IMR-90 (cell line): ENCODE measurements at regions of chr6 and their contacts with region 1.

Region 1: GRCh38 chr6:168956884-168957730 is 296.5 kb downstream of the THBS2 start:
- DNase-seq: peak; percentile 80
- ATAC-seq: peak; percentile 99
- H3K4me3 ChIP-seq: no peak overlapping the region
- H3K27ac ChIP-seq: no peak overlapping the region
- H3K4me1 ChIP-seq: peaks cover 3% of the 10 kb centered on the region
- H3K27me3 ChIP-seq: no peaks in the 10 kb centered on the region
- CTCF ChIP-seq: peak; percentile 93
- POLR2A ChIP-seq: peak; percentile 42; the same call in 1 of the 2 replicates
- RAD21 ChIP-seq: peak; percentile 97

Region 2: DNA sequence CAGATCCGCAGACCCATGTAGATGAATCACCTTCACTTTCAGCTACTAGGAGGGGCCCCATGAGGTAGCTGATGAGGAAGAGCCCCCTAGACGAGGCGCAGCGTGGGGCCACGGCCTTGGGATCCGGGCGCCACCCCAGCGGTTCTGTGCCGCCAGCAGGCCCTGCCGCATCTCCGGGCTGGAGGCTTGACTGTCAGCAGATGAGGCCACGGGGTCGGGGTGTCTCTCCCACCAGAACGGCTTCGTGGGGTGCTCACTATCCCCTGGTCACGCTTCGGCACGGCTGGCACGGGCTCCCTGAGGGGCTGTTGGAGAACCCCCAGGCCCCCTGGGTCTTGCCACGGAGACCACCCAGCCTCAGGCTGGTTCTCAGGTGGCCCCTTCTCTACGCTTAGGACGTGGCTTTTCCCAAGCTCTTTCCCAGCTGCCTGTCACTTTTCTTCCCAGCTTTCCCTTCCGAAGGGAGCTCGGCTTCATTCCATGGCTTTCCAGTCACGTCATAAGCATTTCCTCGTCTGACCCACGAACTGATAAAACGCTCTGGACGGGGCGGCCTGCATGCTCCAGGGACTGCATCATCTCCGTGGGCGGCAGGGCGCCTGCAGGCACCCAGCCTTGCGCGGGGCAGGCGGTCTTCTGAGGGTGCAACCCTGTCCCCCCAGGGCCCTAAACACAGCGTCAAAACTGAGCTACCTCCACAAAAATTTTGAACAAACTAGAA is 210.6 kb after region 1 on chr6:
- CTCF ChIA-PET with region 1: no interaction called
- POLR2A ChIA-PET with region 1: no interaction called
- dilution Hi-C with region 1: no loop called
- in situ Hi-C with region 1: no loop called
- intact Hi-C with region 1: loop called (anchors 5 kb)
- DNase-seq: peak; percentile 99
- ATAC-seq: peak; percentile 80
- H3K4me3 ChIP-seq: no peak overlapping the region
- H3K27ac ChIP-seq: peak overlapping the region; percentile 96
- H3K4me1 ChIP-seq: peaks cover 32% of the 10 kb centered on the region
- H3K27me3 ChIP-seq: no peaks in the 10 kb centered on the region
- CTCF ChIP-seq: no peak
- POLR2A ChIP-seq: no peak; the same call in 1 of the 2 replicates
- RAD21 ChIP-seq: peak; percentile 33; the same call in 1 of the 2 replicates

Region 3: DNA sequence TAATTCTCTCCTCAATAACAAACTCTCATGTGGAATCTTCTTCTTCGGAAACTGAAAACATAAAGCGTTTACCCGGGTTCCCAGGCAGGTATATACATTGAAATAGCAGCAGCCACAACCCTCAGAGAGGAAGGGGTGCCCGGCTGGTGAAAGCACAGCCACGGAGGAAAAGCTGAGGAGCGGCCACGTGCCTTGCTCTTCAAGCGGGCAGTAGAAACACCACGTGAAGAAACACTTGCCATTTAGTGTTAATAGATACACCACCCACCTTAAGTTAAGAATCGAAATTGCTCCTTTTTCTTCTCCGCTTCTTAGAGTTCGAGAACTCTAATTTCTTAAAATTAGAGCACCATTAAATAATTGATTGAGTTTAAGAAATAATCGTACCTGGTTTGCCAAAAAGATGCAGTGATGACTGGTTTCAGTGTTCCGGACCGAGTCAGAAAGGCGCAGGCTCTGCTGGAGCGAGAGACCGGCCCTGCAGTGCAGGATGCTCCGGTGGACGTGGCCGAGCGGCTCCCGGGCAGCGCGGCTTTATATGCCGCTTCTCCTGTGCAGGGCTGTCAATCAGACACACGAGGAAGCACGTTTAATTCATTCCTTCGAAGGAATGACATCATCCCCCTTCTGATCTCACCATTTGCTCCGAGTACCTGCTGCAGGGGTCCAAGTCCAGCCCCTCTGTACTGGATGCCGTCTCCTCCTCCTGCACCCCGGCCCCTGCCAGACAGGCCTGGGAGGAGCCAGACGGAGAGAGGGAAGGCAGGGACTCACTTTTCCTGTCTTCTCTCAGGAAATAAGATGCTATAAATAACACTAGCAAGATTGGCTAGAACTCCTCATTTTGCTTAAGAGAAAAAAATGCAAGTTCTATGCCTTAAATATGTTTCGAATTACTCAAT is 296.5 kb after region 1 on chr6 and contains the start of gene THBS2:
- CTCF ChIA-PET with region 1: no interaction called
- POLR2A ChIA-PET with region 1: no interaction called
- dilution Hi-C with region 1: no loop called
- in situ Hi-C with region 1: no loop called
- intact Hi-C with region 1: loop called (anchors 2 kb)
- DNase-seq: peak; percentile 93
- ATAC-seq: peak; percentile 77
- H3K4me3 ChIP-seq: peak within 1 kb of the TSS; percentile 68
- H3K27ac ChIP-seq: peak within 1 kb of the TSS; percentile 51
- H3K4me1 ChIP-seq: peaks cover 15% of the 10 kb centered on the region
- H3K27me3 ChIP-seq: no peaks in the 10 kb centered on the region
- CTCF ChIP-seq: no peak
- POLR2A ChIP-seq: peak; percentile 95
- RAD21 ChIP-seq: no peak; the same call in 1 of the 2 replicates
- total RNA-seq, gene THBS2: 101 and 113 TPM in 2 replicates

Region 4: DNA sequence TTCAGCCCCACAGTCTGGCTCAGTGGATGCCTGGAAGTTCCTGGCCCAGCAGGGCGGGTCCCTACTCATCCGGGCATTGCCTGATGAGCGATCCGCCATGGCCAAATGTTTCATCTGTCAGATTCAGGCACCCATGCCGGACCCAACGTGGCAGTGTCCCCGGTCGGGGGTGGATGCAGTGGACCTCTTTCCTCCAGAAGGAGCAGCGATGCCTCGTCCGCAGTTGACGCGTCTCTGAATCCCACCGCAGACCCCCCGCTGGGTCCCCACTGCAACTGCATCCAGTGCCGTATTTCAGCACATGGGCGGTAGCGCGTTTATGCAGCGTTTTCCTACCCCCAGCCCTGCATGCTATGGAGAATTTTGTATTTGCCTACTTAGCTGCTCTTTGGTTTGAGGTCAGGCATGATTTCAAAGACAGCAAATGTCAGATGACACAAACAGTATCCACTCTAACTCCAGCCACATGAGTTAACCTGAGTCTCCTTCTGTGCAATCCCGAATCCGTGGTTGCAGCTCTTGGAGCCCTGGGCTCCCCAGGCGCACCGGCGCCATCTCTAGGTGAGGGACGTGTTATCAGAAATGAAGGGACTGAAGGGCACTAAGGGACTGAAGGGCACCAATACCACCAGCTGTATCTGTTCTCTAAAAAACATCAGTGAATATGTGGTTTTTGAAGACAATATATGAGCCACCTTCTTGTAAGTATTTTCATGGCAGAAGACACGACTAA is 369.1 kb after region 1 on chr6:
- CTCF ChIA-PET with region 1: no interaction called
- POLR2A ChIA-PET with region 1: no interaction called
- dilution Hi-C with region 1: no loop called
- in situ Hi-C with region 1: no loop called
- intact Hi-C with region 1: loop called (anchors 5 kb)
- DNase-seq: peak; percentile 52
- ATAC-seq: peak; percentile 43
- H3K4me3 ChIP-seq: no peak overlapping the region
- H3K27ac ChIP-seq: no peak overlapping the region
- H3K4me1 ChIP-seq: peaks cover 2% of the 10 kb centered on the region; the same call in 1 of the 2 replicates
- H3K27me3 ChIP-seq: no peaks in the 10 kb centered on the region
- CTCF ChIP-seq: peak; percentile 51
- POLR2A ChIP-seq: no peak
- RAD21 ChIP-seq: peak; percentile 66

Region 5: GRCh38 chr6:169520104-169520503 is 563.0 kb after region 1 on chr6:
- CTCF ChIA-PET with region 1: interaction called, 7 read pairs
- POLR2A ChIA-PET with region 1: no interaction called
- dilution Hi-C with region 1: no loop called
- in situ Hi-C with region 1: loop called (anchors 10 kb)
- intact Hi-C with region 1: loop called (anchors 1 kb)
- DNase-seq: peak; percentile 70
- ATAC-seq: peak; percentile 77
- H3K4me3 ChIP-seq: no peak overlapping the region
- H3K27ac ChIP-seq: no peak overlapping the region
- H3K4me1 ChIP-seq: no peaks in the 10 kb centered on the region
- H3K27me3 ChIP-seq: no peaks in the 10 kb centered on the region
- CTCF ChIP-seq: peak; percentile 82
- POLR2A ChIP-seq: peak; percentile 32; the same call in 1 of the 2 replicates
- RAD21 ChIP-seq: peak; percentile 91